Endothelial cell of umbilical vein (primary cell): ENCODE measurements at regions of chr7 and their contacts with region 1.

Region 1: GRCh38 chr7:98354511-98355257 is 46.2 kb downstream of the BAIAP2L1 start:
- DNase-seq: peak; percentile 68
- H3K4me3 ChIP-seq: no peak overlapping the region
- H3K27ac ChIP-seq: peak overlapping the region; percentile 14
- H3K4me1 ChIP-seq: peaks cover 19% of the 10 kb centered on the region
- H3K27me3 ChIP-seq: no peaks in the 10 kb centered on the region
- CTCF ChIP-seq: no peak
- POLR2A ChIP-seq: no peak

Region 2: DNA sequence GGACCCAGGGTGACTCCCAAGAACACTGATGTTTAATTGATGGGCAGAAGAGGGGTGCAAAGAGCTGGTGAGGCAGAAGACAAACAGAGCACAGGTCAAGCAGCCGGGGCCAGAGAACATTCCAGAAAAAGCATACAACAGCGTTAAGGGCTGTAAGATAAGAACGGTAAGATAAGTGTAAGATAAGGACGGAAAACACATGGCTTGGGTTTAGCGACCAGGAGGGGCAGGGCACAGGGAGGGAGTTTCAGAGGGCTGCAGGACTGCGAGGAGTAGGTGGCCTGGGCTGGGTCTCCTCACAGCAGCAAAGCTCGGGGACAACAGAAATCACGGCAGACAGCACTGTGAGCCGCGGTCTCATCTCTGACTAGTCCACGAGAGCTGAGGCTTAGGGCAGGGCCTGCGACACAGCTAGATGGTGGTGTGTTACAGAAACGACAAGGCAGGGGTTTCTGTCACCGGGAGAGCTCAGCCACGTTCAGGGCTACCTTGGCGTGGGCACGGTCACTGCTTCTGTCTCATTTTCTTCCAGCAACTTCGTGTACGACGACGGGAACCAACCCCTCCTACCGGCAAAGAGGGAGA is 48.6 kb before region 1 on chr7:
- CTCF ChIA-PET with region 1: no interaction called
- POLR2A ChIA-PET with region 1: no interaction called
- dilution Hi-C with region 1: no loop called
- intact Hi-C with region 1: loop called (anchors 5 kb)
- DNase-seq: no peak
- H3K4me3 ChIP-seq: no peak overlapping the region
- H3K27ac ChIP-seq: no peak overlapping the region
- H3K4me1 ChIP-seq: no peaks in the 10 kb centered on the region
- H3K27me3 ChIP-seq: no peaks in the 10 kb centered on the region
- CTCF ChIP-seq: no peak
- POLR2A ChIP-seq: no peak

Region 3: GRCh38 chr7:98387544-98388224 is 33.0 kb after region 1 on chr7:
- CTCF ChIA-PET with region 1: no interaction called
- POLR2A ChIA-PET with region 1: no interaction called
- dilution Hi-C with region 1: no loop called
- intact Hi-C with region 1: no loop called
- DNase-seq: no peak
- H3K4me3 ChIP-seq: no peak overlapping the region
- H3K27ac ChIP-seq: no peak overlapping the region
- H3K4me1 ChIP-seq: no peaks in the 10 kb centered on the region
- H3K27me3 ChIP-seq: no peaks in the 10 kb centered on the region
- CTCF ChIP-seq: no peak
- POLR2A ChIP-seq: no peak